ENCODE measurements at regions of chr6 and their contacts with region 1.

Region 1: DNA sequence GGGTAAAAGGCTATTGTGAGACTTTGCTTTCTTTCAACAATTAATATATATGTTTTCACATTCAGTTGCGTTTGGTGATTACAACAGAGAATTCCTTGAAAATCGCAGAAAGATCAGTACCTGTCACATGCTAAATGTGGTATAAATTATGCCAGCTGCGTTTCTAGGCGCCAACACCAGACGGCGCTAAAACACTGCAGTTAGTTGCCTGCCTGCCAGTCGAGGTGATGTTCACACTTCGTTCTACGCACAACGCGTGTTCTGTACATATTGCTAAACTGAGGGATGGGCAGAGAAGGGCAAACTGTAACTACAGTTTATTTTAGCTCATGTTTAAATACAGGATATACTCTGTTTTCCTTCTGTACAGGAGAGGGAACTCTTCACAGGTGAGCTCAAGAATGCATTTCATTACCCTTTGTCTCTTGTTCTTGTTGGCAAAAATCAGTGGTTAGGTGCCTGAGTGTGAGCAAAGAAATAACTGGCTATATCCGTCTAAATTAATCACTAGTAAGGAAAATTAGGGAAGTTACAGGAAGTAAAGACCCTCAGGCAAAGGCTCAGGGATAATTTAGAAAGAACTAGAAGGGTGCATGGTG is 100.1 kb upstream of the RGS17 start:
- DNase-seq: peak; percentile 51 to 52
- H3K4me3 ChIP-seq: no peak overlapping the region
- H3K4me3 Mint-ChIP-seq: no peak overlapping the region
- H3K27ac Mint-ChIP-seq: no peak overlapping the region
- H3K4me1 ChIP-seq: no peaks in the 10 kb centered on the region
- H3K4me1 Mint-ChIP-seq: no peaks in the 10 kb centered on the region
- H3K27me3 ChIP-seq: no peaks in the 10 kb centered on the region
- H3K27me3 Mint-ChIP-seq: peaks cover 6% of the 10 kb centered on the region
- CTCF ChIP-seq: peak; percentile 82 to 83

Region 2: DNA sequence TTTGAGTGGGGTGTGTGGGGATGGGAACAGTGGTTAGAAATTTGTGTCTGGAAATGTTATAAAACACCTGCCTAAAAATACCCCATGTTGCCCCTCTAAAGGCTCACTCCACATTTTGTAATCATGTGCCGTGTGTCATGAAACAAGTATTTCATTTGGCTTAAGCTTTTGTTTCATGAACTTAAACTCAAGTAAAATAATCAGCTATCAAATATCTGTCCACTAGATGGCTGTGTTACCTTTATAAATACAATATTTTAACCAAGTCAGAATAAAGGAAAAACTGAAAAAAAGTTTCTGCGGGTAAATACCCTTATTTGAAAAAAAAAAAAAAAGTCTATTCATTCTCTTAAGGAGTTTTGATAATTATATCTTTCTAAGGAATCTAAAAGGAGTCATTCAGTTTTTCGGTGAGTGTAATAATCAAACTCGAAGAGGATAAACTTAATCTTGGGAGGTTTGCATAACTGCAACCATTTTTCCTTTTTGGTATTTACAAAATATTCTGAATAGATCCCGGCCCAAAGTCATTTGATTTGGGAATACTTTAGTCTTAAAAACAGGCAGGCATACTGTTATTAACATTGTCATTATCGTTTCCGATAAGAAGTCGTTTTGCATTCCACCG is 198.8 kb before region 1 on chr6:
- CTCF ChIA-PET with region 1: no interaction called
- POLR2A ChIA-PET with region 1: no interaction called
- intact Hi-C with region 1: loop called (anchors 5 kb)
- DNase-seq: no peak
- H3K4me3 ChIP-seq: no peak overlapping the region
- H3K4me3 Mint-ChIP-seq: no peak overlapping the region
- H3K27ac Mint-ChIP-seq: no peak overlapping the region
- H3K4me1 ChIP-seq: no peaks in the 10 kb centered on the region
- H3K4me1 Mint-ChIP-seq: peaks cover 6% of the 10 kb centered on the region
- H3K27me3 ChIP-seq: no peaks in the 10 kb centered on the region
- H3K27me3 Mint-ChIP-seq: peaks cover 2% of the 10 kb centered on the region
- CTCF ChIP-seq: peak; percentile 32 to 37

Region 3: DNA sequence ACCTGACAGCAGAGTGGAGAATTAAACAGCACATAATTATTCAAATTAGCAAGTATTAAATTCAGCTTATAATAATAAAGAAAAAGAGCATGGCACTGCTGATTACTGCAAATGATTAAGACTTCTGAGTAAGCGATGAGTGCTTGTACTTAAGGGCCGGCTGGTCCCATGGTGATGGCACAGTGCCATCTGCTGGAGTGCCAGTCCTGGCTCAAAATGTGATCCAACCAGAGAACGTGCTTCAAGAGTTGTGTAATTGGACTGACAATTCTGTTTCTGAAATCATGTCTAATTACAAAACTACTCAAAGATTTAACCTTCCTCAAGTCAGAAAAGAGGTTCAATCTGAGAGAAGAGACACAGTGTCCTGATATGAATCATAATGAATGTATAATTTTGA is 81.5 kb after region 1 on chr6:
- CTCF ChIA-PET with region 1: no interaction called
- POLR2A ChIA-PET with region 1: no interaction called
- intact Hi-C with region 1: loop called (anchors 1 kb)
- DNase-seq: peak in 1 of 2 experiments; percentile 37
- H3K4me3 ChIP-seq: no peak overlapping the region
- H3K4me3 Mint-ChIP-seq: no peak overlapping the region
- H3K27ac Mint-ChIP-seq: no peak overlapping the region
- H3K4me1 ChIP-seq: no peaks in the 10 kb centered on the region
- H3K4me1 Mint-ChIP-seq: no peaks in the 10 kb centered on the region
- H3K27me3 ChIP-seq: no peaks in the 10 kb centered on the region
- H3K27me3 Mint-ChIP-seq: peaks cover 11% of the 10 kb centered on the region
- CTCF ChIP-seq: peak; percentile 33 to 60

Region 4: DNA sequence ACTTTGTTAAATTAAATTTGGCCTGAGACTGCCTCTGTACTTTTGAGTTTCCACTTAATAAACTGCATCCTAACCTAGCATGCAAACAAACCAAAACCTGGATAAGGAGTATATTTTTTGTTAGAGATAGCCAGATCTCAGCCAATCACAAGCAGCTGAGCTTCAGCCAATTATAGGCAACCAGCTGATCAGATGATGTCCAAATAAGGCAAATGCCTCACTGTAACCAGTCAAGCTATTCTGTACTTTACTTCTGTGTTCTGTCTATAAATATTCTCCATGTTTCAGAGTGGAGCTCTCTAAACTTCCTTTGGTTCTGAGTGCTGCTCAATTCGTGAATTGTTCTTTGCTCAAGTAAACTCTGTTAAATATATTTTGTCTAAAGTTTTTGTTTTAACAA is 94.5 kb after region 1 on chr6:
- CTCF ChIA-PET with region 1: no interaction called
- POLR2A ChIA-PET with region 1: no interaction called
- intact Hi-C with region 1: no loop called
- DNase-seq: no peak
- H3K4me3 ChIP-seq: no peak overlapping the region
- H3K4me3 Mint-ChIP-seq: no peak overlapping the region
- H3K27ac Mint-ChIP-seq: no peak overlapping the region
- H3K4me1 ChIP-seq: no peaks in the 10 kb centered on the region
- H3K4me1 Mint-ChIP-seq: no peaks in the 10 kb centered on the region
- H3K27me3 ChIP-seq: no peaks in the 10 kb centered on the region
- H3K27me3 Mint-ChIP-seq: no peaks in the 10 kb centered on the region
- CTCF ChIP-seq: no peak

Region 5: GRCh38 chr6:153511896-153512496 is 280.8 kb after region 1 on chr6:
- CTCF ChIA-PET with region 1: no interaction called
- POLR2A ChIA-PET with region 1: no interaction called
- intact Hi-C with region 1: loop called (anchors 1 kb)
- DNase-seq: peak in 1 of 2 experiments; percentile 45
- H3K4me3 ChIP-seq: no peak overlapping the region
- H3K4me3 Mint-ChIP-seq: no peak overlapping the region
- H3K27ac Mint-ChIP-seq: no peak overlapping the region
- H3K4me1 ChIP-seq: no peaks in the 10 kb centered on the region
- H3K4me1 Mint-ChIP-seq: no peaks in the 10 kb centered on the region
- H3K27me3 ChIP-seq: no peaks in the 10 kb centered on the region
- H3K27me3 Mint-ChIP-seq: no peaks in the 10 kb centered on the region
- CTCF ChIP-seq: peak; percentile 41 to 60

Region 6: GRCh38 chr6:153553627-153554026 is 322.5 kb after region 1 on chr6:
- CTCF ChIA-PET with region 1: no interaction called
- POLR2A ChIA-PET with region 1: no interaction called
- intact Hi-C with region 1: loop called (anchors 1 kb)
- DNase-seq: peak in 1 of 2 experiments; percentile 30
- H3K4me3 ChIP-seq: no peak overlapping the region
- H3K4me3 Mint-ChIP-seq: no peak overlapping the region
- H3K27ac Mint-ChIP-seq: no peak overlapping the region
- H3K4me1 ChIP-seq: no peaks in the 10 kb centered on the region
- H3K4me1 Mint-ChIP-seq: no peaks in the 10 kb centered on the region
- H3K27me3 ChIP-seq: no peaks in the 10 kb centered on the region
- H3K27me3 Mint-ChIP-seq: no peaks in the 10 kb centered on the region
- CTCF ChIP-seq: peak; percentile 24 to 51

Region 7: DNA sequence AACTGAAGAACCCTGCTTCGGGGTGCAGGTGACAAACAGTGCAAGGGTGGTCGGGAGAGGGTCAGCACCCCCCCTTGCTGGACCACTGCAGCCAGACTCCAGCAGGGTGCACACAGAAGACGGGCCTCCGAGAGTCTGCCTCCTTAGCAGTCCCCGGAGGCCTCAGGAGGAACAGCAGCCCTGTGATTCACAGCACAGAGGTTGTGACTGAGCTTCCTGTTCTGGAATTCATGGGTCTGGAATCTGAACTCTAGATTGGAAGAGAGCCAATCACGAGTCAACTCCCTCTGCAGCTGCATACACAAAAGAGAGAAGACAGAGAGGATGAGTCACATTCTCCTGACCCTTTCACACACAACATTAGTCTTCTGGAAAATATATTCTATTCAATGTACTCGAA is 558.9 kb after region 1 on chr6:
- CTCF ChIA-PET with region 1: no interaction called
- POLR2A ChIA-PET with region 1: no interaction called
- intact Hi-C with region 1: loop called (anchors 5 kb)
- DNase-seq: no peak
- H3K4me3 ChIP-seq: no peak overlapping the region
- H3K4me3 Mint-ChIP-seq: no peak overlapping the region
- H3K27ac Mint-ChIP-seq: no peak overlapping the region
- H3K4me1 ChIP-seq: no peaks in the 10 kb centered on the region
- H3K4me1 Mint-ChIP-seq: no peaks in the 10 kb centered on the region
- H3K27me3 ChIP-seq: no peaks in the 10 kb centered on the region
- H3K27me3 Mint-ChIP-seq: peaks cover 2% of the 10 kb centered on the region
- CTCF ChIP-seq: no peak

Region 8: GRCh38 chr6:153947808-153948447 is 716.8 kb after region 1 on chr6:
- CTCF ChIA-PET with region 1: no interaction called
- POLR2A ChIA-PET with region 1: no interaction called
- intact Hi-C with region 1: loop called (anchors 1 kb)
- DNase-seq: peak in 1 of 2 experiments; percentile 55
- H3K4me3 ChIP-seq: no peak overlapping the region
- H3K4me3 Mint-ChIP-seq: no peak overlapping the region
- H3K27ac Mint-ChIP-seq: no peak overlapping the region
- H3K4me1 ChIP-seq: peaks cover 16% of the 10 kb centered on the region; the same call in 1 of the 2 replicates
- H3K4me1 Mint-ChIP-seq: no peaks in the 10 kb centered on the region
- H3K27me3 ChIP-seq: no peaks in the 10 kb centered on the region
- H3K27me3 Mint-ChIP-seq: peaks cover 3% of the 10 kb centered on the region
- CTCF ChIP-seq: peak; percentile 90 to 92

Measured in Caco-2 (cell line).